ENCODE measurements at regions of chr7 and their contacts with region 1.

Region 1: GRCh38 chr7:142788303-142789289 is 17.8 kb downstream of the PRSS2 start:
- DNase-seq: peak in 3 of 5 donors; percentile 8 to 47 (median 25)
- H3K4me3 ChIP-seq: peak overlapping the region; percentile 83 to 85
- H3K4me3 Mint-ChIP-seq: peak overlapping the region; percentile 90 to 100 (median 98)
- H3K27ac ChIP-seq: peak overlapping the region; percentile 99
- H3K27ac Mint-ChIP-seq: peak overlapping the region; percentile 95 to 100 (median 96)
- H3K4me1 ChIP-seq: peaks cover 38% of the 10 kb centered on the region
- H3K4me1 Mint-ChIP-seq: peaks cover 14 to 47% (median 24%) of the 10 kb centered on the region in 4 donors
- H3K27me3 ChIP-seq: no peaks in the 10 kb centered on the region
- H3K27me3 Mint-ChIP-seq: no peaks in the 10 kb centered on the region

Region 2: DNA sequence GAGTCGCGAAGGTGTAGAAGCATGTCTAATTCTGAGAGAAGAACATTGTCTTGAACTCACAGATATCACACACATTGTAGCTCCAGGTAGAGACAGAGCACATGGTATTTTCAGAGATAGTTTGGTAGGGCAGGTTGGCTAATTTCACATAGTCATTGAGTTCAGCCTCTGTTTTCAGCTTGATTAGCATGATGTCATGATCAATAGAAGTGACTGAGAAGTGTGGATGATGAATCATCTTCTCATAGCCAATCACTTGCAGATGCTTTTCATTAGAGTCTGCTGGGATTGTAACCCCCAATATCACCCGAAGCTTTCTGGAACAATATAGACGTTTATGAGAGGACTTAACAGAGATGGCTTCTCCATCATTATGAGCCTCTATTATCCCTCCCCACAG is 533.6 kb before region 1 on chr7:
- CTCF ChIA-PET with region 1: no interaction called
- POLR2A ChIA-PET with region 1: no interaction called
- intact Hi-C with region 1: no loop called
- DNase-seq: no peak
- H3K4me3 ChIP-seq: no peak overlapping the region
- H3K4me3 Mint-ChIP-seq: no peak overlapping the region
- H3K27ac ChIP-seq: no peak overlapping the region
- H3K27ac Mint-ChIP-seq: no peak overlapping the region
- H3K4me1 ChIP-seq: no peaks in the 10 kb centered on the region
- H3K4me1 Mint-ChIP-seq: no peaks in the 10 kb centered on the region
- H3K27me3 ChIP-seq: no peaks in the 10 kb centered on the region
- H3K27me3 Mint-ChIP-seq: no peaks in the 10 kb centered on the region

Region 3: DNA sequence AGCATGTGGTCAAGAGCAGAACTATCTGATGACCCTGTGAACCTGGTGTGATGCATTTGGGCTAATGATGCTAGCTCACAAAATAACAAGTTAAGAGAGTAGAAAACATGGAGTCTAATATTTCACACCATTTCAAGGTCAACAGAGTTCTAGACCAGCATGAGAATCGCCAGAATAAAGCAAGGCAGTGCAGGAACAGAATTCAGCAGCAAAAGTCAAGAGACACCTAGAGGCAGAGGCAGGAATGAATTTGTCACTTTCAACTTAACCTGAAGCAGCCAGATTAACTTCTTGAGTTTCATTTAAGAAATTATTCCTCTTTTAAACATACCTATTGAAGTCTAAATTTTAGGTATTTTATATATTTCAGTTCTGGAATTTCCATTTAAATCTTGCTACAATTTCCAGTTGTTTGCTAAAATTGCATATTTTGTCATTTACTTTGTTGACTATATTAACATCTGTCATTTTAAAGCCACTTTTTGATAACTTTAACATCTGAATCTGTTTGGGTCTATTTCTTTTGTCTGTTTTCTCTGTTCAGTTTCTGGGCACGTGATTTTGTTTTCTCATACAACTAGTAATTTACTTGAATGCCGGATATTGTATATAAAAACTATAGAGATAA is 486.6 kb before region 1 on chr7:
- CTCF ChIA-PET with region 1: interaction called, 3 read pairs
- POLR2A ChIA-PET with region 1: interaction called, 25 read pairs
- intact Hi-C with region 1: no loop called
- DNase-seq: no peak
- H3K4me3 ChIP-seq: no peak overlapping the region
- H3K4me3 Mint-ChIP-seq: no peak overlapping the region
- H3K27ac ChIP-seq: no peak overlapping the region
- H3K27ac Mint-ChIP-seq: no peak overlapping the region
- H3K4me1 ChIP-seq: peaks cover 8% of the 10 kb centered on the region
- H3K4me1 Mint-ChIP-seq: peaks cover 14 to 28% (median 18%) of the 10 kb centered on the region in 4 donors
- H3K27me3 ChIP-seq: no peaks in the 10 kb centered on the region
- H3K27me3 Mint-ChIP-seq: peaks cover 15 to 18% of the 10 kb centered on the region in 2 donors

Region 4: DNA sequence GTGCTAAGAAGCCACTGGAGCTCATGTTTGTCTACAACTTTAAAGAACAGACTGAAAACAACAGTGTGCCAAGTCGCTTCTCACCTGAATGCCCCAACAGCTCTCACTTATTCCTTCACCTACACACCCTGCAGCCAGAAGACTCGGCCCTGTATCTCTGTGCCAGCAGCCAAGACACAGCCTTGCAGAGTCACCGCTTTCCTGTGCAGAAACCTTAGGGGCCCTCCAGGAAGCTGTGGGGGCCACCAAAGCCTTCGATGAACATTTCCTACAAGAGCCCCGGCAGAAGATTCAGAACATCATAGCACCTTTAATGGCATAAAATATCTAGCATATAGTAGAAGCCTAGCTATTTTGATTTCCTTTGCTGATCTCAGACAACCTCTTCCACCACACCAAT is 442.8 kb before region 1 on chr7:
- CTCF ChIA-PET with region 1: no interaction called
- POLR2A ChIA-PET with region 1: interaction called, 153 read pairs
- intact Hi-C with region 1: no loop called
- DNase-seq: peak in 3 of 5 donors; percentile 48 to 62 (median 55)
- H3K4me3 ChIP-seq: no peak overlapping the region
- H3K4me3 Mint-ChIP-seq: peak overlapping the region in 6 of 8 donors; percentile 2 to 75 (median 44)
- H3K27ac ChIP-seq: peak overlapping the region; percentile 10
- H3K27ac Mint-ChIP-seq: peak overlapping the region in 5 of 7 donors; percentile 6 to 84 (median 39)
- H3K4me1 ChIP-seq: peaks cover 25% of the 10 kb centered on the region
- H3K4me1 Mint-ChIP-seq: peaks cover 0 to 37% (median 9%) of the 10 kb centered on the region in 4 donors
- H3K27me3 ChIP-seq: no peaks in the 10 kb centered on the region
- H3K27me3 Mint-ChIP-seq: peaks cover 0 to 3% of the 10 kb centered on the region in 2 donors

Region 5: GRCh38 chr7:142496545-142497041 is 292.0 kb before region 1 on chr7:
- CTCF ChIA-PET with region 1: no interaction called
- POLR2A ChIA-PET with region 1: interaction called, 13 read pairs
- intact Hi-C with region 1: no loop called
- DNase-seq: peak; percentile 33 to 46 (median 36)
- H3K4me3 ChIP-seq: no peak overlapping the region
- H3K4me3 Mint-ChIP-seq: peak overlapping the region; percentile 40 to 75 (median 66)
- H3K27ac ChIP-seq: no peak overlapping the region
- H3K27ac Mint-ChIP-seq: peak overlapping the region; percentile 39 to 86 (median 74)
- H3K4me1 ChIP-seq: peaks cover 30% of the 10 kb centered on the region
- H3K4me1 Mint-ChIP-seq: peaks cover 24 to 51% (median 30%) of the 10 kb centered on the region in 4 donors
- H3K27me3 ChIP-seq: no peaks in the 10 kb centered on the region
- H3K27me3 Mint-ChIP-seq: no peaks in the 10 kb centered on the region

Region 6: GRCh38 chr7:142557971-142558582 is 230.5 kb before region 1 on chr7:
- CTCF ChIA-PET with region 1: no interaction called
- POLR2A ChIA-PET with region 1: interaction called, 13 read pairs
- intact Hi-C with region 1: no loop called
- DNase-seq: peak; percentile 31 to 47 (median 41)
- H3K4me3 ChIP-seq: no peak overlapping the region
- H3K4me3 Mint-ChIP-seq: peak overlapping the region in 7 of 8 donors; percentile 17 to 77 (median 66)
- H3K27ac ChIP-seq: no peak overlapping the region
- H3K27ac Mint-ChIP-seq: peak overlapping the region in 4 of 7 donors; percentile 3 to 72 (median 37)
- H3K4me1 ChIP-seq: no peaks in the 10 kb centered on the region
- H3K4me1 Mint-ChIP-seq: peaks cover 0 to 4% (median 2%) of the 10 kb centered on the region in 4 donors
- H3K27me3 ChIP-seq: no peaks in the 10 kb centered on the region
- H3K27me3 Mint-ChIP-seq: peaks cover 2 to 3% of the 10 kb centered on the region in 2 donors

Region 7: GRCh38 chr7:142612237-142612881 is 176.2 kb before region 1 on chr7:
- CTCF ChIA-PET with region 1: no interaction called
- POLR2A ChIA-PET with region 1: interaction called, 59 read pairs
- intact Hi-C with region 1: no loop called
- DNase-seq: no peak
- H3K4me3 ChIP-seq: no peak overlapping the region
- H3K4me3 Mint-ChIP-seq: no peak overlapping the region
- H3K27ac ChIP-seq: no peak overlapping the region
- H3K27ac Mint-ChIP-seq: peak overlapping the region in 5 of 7 donors; percentile 8 to 83 (median 48)
- H3K4me1 ChIP-seq: peaks cover 13% of the 10 kb centered on the region
- H3K4me1 Mint-ChIP-seq: peaks cover 7 to 24% (median 15%) of the 10 kb centered on the region in 4 donors
- H3K27me3 ChIP-seq: no peaks in the 10 kb centered on the region
- H3K27me3 Mint-ChIP-seq: no peaks in the 10 kb centered on the region

Region 8: GRCh38 chr7:142711746-142712619 is 76.6 kb before region 1 on chr7:
- CTCF ChIA-PET with region 1: interaction called, 83 read pairs
- POLR2A ChIA-PET with region 1: interaction called, 117 read pairs
- intact Hi-C with region 1: loop called (anchors 1 kb)
- DNase-seq: peak in 3 of 5 donors; percentile 19 to 45 (median 26)
- H3K4me3 ChIP-seq: peak overlapping the region in 1 of 2 donors; percentile 53
- H3K4me3 Mint-ChIP-seq: peak overlapping the region; percentile 87 to 94 (median 89)
- H3K27ac ChIP-seq: peak overlapping the region; percentile 35
- H3K27ac Mint-ChIP-seq: peak overlapping the region; percentile 85 to 95 (median 93)
- H3K4me1 ChIP-seq: peaks cover 78% of the 10 kb centered on the region
- H3K4me1 Mint-ChIP-seq: peaks cover 32 to 80% (median 62%) of the 10 kb centered on the region in 4 donors
- H3K27me3 ChIP-seq: no peaks in the 10 kb centered on the region
- H3K27me3 Mint-ChIP-seq: no peaks in the 10 kb centered on the region

Measured in CD4-positive, alpha-beta memory T cell (primary cell).